Endothelial cell of umbilical vein (primary cell): ENCODE measurements at regions of chr4 and their contacts with region 1.

Region 1: DNA sequence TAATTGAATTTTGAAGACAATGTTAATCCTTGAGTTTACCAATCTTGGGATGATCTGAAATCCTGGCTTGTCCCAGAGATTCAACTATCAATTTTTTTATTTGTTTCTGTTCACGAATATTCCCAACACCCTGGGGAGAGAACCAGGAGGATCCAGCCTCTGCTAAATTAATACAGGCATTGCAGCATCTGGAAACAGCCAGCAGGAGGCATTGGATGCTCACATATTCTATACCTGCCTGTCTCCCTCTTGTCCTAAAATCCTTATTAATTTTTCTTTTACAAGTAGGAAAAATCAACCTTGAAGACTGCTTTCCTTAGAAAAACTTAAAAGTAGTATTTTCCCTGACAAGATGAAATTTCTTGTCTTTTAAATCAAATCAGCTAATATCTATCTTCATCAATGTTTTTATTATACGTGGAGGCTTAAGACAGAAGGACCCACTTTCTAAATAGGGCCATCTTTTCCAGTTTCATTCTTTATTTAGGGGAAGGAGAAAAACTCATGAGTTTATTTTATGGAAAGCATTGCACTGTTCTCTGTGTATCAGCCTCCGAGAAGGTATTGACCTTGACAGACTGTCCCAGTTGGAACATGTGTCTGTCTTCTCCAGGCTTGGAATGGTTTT is 102.4 kb downstream of the CLNK start:
- DNase-seq: peak; percentile 56
- H3K4me3 ChIP-seq: no peak overlapping the region
- H3K27ac ChIP-seq: no peak overlapping the region
- H3K4me1 ChIP-seq: no peaks in the 10 kb centered on the region
- H3K27me3 ChIP-seq: peaks cover 0 to 3% of the 10 kb centered on the region in 2 experiments
- CTCF ChIP-seq: peak; percentile 72 to 75
- POLR2A ChIP-seq: no peak

Region 2: GRCh38 chr4:10715696-10716095 is 133.5 kb after region 1 on chr4:
- CTCF ChIA-PET with region 1: interaction called, 9 read pairs
- POLR2A ChIA-PET with region 1: no interaction called
- dilution Hi-C with region 1: no loop called
- intact Hi-C with region 1: loop called (anchors 2 kb)
- DNase-seq: peak; percentile 3
- H3K4me3 ChIP-seq: no peak overlapping the region
- H3K27ac ChIP-seq: no peak overlapping the region
- H3K4me1 ChIP-seq: no peaks in the 10 kb centered on the region
- H3K27me3 ChIP-seq: no peaks in the 10 kb centered on the region
- CTCF ChIP-seq: no peak
- POLR2A ChIP-seq: no peak

Region 3: DNA sequence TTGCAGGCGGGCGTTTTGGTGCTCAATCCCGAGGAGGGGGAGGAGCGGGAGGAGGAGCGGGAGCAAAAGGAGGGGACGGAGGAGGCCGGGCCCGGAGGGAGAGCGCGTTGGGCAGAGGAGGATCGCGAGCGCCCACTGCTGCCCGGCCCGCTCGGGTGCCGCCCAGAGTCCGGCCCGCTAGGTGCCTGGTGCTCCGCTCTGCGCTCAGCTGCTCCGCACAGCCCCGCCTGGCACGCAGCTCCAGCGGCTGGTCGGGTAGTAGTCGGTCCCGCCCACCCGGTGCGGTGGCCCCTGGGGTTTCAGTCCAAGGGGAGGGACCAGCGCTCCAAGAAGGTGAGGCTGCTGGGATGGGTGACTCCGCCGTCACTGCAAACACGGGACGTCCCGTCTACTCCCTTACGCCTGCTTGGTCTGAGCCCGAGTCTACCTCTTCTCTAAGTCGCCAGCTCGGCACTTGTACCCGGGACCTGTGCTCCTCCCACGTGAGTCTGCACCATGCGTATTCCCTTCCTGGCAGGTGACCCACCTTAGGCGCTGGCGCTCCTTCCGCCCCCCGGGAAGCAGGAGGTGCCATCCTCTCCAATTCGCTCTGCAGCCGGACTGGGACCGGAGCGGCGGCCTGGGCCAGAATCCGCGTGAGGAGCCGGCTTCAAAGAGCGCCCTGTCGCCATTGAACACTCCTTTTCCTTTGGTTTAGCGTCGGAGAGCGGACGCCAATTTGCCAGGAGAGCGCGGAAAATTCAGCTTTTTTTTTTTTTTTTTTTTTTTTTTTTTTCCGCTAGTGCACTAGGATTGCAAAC is 846.9 kb after region 1 on chr4:
- CTCF ChIA-PET with region 1: interaction called, 35 read pairs
- POLR2A ChIA-PET with region 1: no interaction called
- dilution Hi-C with region 1: no loop called
- intact Hi-C with region 1: loop called (anchors 1 kb)
- DNase-seq: peak; percentile 75
- H3K4me3 ChIP-seq: peak overlapping the region; percentile 56 to 75 (median 72)
- H3K27ac ChIP-seq: no peak overlapping the region
- H3K4me1 ChIP-seq: peaks cover 23% of the 10 kb centered on the region
- H3K27me3 ChIP-seq: peaks cover 10 to 13% of the 10 kb centered on the region in 2 experiments
- CTCF ChIP-seq: peak; percentile 65 to 89
- POLR2A ChIP-seq: no peak

Region 4: DNA sequence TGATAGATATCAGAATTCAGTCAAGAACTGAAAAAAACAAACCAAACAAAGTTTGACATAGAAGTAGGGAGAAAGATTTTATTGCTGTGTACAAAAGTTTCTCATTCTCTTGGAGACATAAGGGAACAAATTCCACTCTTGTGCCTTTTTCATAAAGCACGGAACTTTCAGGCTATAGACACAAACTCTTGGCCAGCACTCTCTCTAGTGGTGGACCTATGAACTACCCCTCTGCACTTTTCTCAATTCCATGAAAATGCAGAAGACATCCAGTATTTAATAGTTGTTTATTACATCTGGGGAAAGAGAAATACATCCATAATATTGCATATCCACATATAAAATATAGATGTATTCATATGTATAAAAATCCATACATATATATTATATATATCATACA is 1138.1 kb after region 1 on chr4:
- CTCF ChIA-PET with region 1: interaction called, 4 read pairs
- POLR2A ChIA-PET with region 1: no interaction called
- dilution Hi-C with region 1: no loop called
- intact Hi-C with region 1: loop called (anchors 2 kb)
- DNase-seq: peak; percentile 62
- H3K4me3 ChIP-seq: no peak overlapping the region
- H3K27ac ChIP-seq: no peak overlapping the region
- H3K4me1 ChIP-seq: peaks cover 9% of the 10 kb centered on the region
- H3K27me3 ChIP-seq: no peaks in the 10 kb centered on the region
- CTCF ChIP-seq: peak; percentile 62 to 77
- POLR2A ChIP-seq: no peak

Region 5: DNA sequence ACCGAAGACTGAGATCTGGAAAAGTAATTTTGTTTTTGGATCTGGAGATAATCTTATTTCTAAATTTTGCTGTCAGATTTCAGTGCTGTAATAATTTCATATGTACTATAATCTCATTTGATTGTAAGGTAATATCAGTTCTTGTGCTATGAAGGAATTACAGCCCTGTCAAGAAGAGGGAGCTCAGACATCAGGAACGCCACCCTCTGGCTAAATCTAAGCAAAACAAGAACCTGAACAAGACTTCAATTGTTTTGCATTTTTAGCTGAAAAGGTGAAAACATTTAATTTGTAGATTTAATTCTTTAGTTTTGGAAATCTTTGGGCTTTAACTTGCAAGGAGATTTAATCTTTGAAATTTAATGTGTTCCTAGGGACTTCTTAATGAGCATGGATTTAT is 1371.9 kb after region 1 on chr4:
- CTCF ChIA-PET with region 1: interaction called, 5 read pairs
- POLR2A ChIA-PET with region 1: no interaction called
- dilution Hi-C with region 1: no loop called
- intact Hi-C with region 1: loop called (anchors 10 kb)
- DNase-seq: peak; percentile 79
- H3K4me3 ChIP-seq: no peak overlapping the region
- H3K27ac ChIP-seq: no peak overlapping the region
- H3K4me1 ChIP-seq: no peaks in the 10 kb centered on the region
- H3K27me3 ChIP-seq: no peaks in the 10 kb centered on the region
- CTCF ChIP-seq: peak; percentile 32 to 50
- POLR2A ChIP-seq: no peak